GM12878 (cell line): ENCODE measurements at regions of chr11 and their contacts with region 1.

Region 1: DNA sequence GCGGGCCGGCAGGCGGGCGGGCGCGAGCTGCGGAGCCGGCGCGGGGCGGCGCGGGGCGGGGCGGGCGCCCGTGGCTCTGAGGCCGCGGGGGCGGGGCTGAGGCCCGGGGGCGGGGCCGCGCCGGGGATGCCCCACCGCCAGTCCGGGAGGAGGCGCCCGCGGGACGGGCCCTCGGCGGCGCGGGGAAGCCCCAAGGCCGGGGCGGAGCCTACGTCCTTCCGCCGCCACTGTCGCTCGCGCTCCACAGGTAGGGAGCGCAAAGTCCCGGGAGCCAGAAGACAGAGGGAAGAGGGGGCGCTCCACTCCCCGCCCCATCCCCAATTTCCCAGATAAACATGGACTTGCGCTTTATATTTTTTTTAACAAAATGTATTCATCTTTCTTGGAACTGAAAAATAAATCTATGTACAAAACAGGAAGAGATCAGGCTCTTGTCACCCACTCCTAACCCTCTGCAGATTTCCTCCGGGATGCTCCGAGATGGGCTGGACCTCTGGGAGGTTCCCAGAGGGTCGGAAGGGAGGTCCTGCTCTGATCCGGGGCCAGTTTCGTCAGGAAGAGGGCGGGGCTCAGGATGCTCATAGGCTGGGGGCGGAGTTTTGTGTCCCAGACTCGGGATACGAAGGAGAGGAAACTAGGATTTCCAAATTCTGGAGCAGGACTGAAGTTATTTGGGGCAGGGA is at the start of gene MAP4K2:
- DNase-seq: peak; percentile 3
- ATAC-seq: peak; percentile 73
- H3K4me3 ChIP-seq: peak within 1 kb of the TSS; percentile 87
- H3K27ac ChIP-seq: peak within 1 kb of the TSS; percentile 92
- H3K4me1 ChIP-seq: peaks cover 37% of the 10 kb centered on the region
- H3K27me3 ChIP-seq: no peaks in the 10 kb centered on the region
- CTCF ChIP-seq: peak in 2 of 3 experiments; percentile 6 to 25; a peak in 2 of 6 replicates
- EP300 ChIP-seq: no peak
- POLR2A ChIP-seq: peak; percentile 71
- RAD21 ChIP-seq: no peak
- polyA plus RNA-seq, gene MAP4K2: 0.98 to 4.4 TPM

Region 2: DNA sequence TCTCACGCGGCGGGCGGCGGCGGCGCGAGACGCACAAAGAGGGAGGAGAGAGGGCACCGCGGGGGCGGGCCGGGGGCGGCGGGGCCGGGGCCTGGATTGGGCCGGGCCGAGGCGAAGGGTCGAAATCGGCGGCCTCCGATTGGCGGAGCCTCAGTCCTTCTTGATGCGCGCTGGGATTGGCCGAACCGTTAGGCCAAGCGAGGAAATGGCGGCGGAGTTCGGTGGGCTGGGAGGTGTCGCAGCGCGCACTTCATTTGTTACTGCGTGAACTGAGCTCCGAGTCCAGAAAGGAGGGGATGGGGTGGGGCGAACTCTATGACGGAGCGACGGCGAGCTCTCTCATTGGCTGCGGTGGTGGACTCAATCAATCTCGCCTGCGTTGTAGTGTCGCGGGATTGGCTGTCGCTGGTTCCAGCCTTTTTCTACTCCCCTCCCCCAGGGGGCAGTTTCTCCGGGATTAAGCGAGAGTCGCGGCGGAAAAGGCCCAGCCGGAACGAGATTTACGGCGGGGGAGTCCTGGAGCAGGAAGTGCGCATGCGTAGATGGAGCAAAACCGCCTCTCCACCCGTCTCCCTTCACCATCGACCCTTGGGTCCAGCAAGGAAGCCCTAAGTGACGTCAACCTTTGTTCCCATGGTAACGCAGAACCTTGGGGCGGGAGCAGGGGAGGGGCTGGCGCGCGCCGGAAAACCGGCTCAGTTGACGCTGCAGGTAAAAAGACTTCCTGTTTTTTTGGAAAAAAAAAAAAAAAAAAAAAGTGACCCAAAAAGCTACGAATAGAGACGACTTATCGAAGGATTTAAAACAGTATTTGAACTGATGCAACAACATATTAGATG is 24.6 kb before region 1 on chr11 and contains the start of gene SF1:
- CTCF ChIA-PET with region 1: interaction called, 18 read pairs
- POLR2A ChIA-PET with region 1: interaction called, 33 read pairs
- RAD21 ChIA-PET with region 1: interaction called, 12 read pairs
- SMC1A ChIA-PET with region 1: interaction called, 7 read pairs
- in situ Hi-C with region 1: no loop called
- intact Hi-C with region 1: no loop called
- DNase-seq: peak; percentile 100
- ATAC-seq: peak; percentile 93
- H3K4me3 ChIP-seq: peak within 1 kb of the TSS; percentile 80
- H3K27ac ChIP-seq: peak within 1 kb of the TSS; percentile 86
- H3K4me1 ChIP-seq: peaks cover 31% of the 10 kb centered on the region
- H3K27me3 ChIP-seq: no peaks in the 10 kb centered on the region
- CTCF ChIP-seq: no peak
- EP300 ChIP-seq: peak in 1 of 2 experiments; percentile 38; a peak in 1 of 4 replicates
- POLR2A ChIP-seq: peak; percentile 97
- RAD21 ChIP-seq: no peak
- polyA plus RNA-seq, gene SF1: 13.6 to 29.6 TPM

Region 3: GRCh38 chr11:64787526-64788320 is 15.6 kb before region 1 on chr11:
- CTCF ChIA-PET with region 1: interaction called, 41 read pairs
- POLR2A ChIA-PET with region 1: interaction called, 4 read pairs
- RAD21 ChIA-PET with region 1: interaction called, 5 read pairs
- SMC1A ChIA-PET with region 1: interaction called, 9 read pairs
- in situ Hi-C with region 1: no loop called
- intact Hi-C with region 1: no loop called
- DNase-seq: no peak
- ATAC-seq: peak; percentile 94
- H3K4me3 ChIP-seq: no peak overlapping the region
- H3K27ac ChIP-seq: no peak overlapping the region
- H3K4me1 ChIP-seq: peaks cover 5% of the 10 kb centered on the region
- H3K27me3 ChIP-seq: no peaks in the 10 kb centered on the region
- CTCF ChIP-seq: peak; percentile 68 to 87 (median 70)
- EP300 ChIP-seq: no peak
- POLR2A ChIP-seq: no peak
- RAD21 ChIP-seq: peak; percentile 70